CD4-positive, alpha-beta memory T cell (primary cell): ENCODE measurements at regions of chr17 and their contacts with region 1.

Region 1: GRCh38 chr17:14152721-14153120 is 83.4 kb downstream of the COX10 start:
- DNase-seq: no peak
- H3K4me3 ChIP-seq: no peak overlapping the region
- H3K4me3 Mint-ChIP-seq: no peak overlapping the region
- H3K27ac ChIP-seq: no peak overlapping the region
- H3K27ac Mint-ChIP-seq: peak overlapping the region in 3 of 7 donors; percentile 11 to 72 (median 17)
- H3K4me1 ChIP-seq: peaks cover 23% of the 10 kb centered on the region
- H3K4me1 Mint-ChIP-seq: peaks cover 29 to 55% (median 38%) of the 10 kb centered on the region in 4 donors
- H3K27me3 ChIP-seq: no peaks in the 10 kb centered on the region
- H3K27me3 Mint-ChIP-seq: no peaks in the 10 kb centered on the region

Region 2: GRCh38 chr17:14113137-14113536 is 39.6 kb before region 1 on chr17:
- CTCF ChIA-PET with region 1: no interaction called
- POLR2A ChIA-PET with region 1: no interaction called
- intact Hi-C with region 1: loop called (anchors 5 kb)
- DNase-seq: no peak
- H3K4me3 ChIP-seq: no peak overlapping the region
- H3K4me3 Mint-ChIP-seq: peak overlapping the region in 1 of 8 donors; percentile 13
- H3K27ac ChIP-seq: no peak overlapping the region
- H3K27ac Mint-ChIP-seq: peak overlapping the region in 2 of 7 donors; percentile 25 to 38
- H3K4me1 ChIP-seq: peaks cover 27% of the 10 kb centered on the region
- H3K4me1 Mint-ChIP-seq: peaks cover 40 to 60% (median 45%) of the 10 kb centered on the region in 4 donors
- H3K27me3 ChIP-seq: no peaks in the 10 kb centered on the region
- H3K27me3 Mint-ChIP-seq: no peaks in the 10 kb centered on the region

Region 3: DNA sequence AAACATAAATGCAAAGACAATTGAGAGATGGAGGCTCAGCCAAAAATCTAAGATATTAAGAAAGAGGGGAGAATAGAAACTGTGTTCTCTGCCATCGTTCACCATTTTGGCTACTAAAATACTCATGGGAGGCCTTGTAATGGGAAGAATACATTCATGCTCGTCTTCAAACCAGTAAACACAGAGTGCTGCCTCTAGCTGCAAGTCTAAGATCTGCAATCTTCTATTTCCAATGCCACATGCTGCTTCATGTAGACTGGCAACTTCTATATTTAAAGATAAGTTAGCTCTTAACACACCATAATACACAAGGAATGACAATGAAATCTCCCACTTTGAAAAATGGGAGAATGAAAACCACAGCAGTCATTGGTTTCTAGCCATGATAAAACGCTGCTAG is 535.4 kb after region 1 on chr17:
- CTCF ChIA-PET with region 1: no interaction called
- POLR2A ChIA-PET with region 1: no interaction called
- intact Hi-C with region 1: no loop called
- DNase-seq: no peak
- H3K4me3 ChIP-seq: no peak overlapping the region
- H3K4me3 Mint-ChIP-seq: no peak overlapping the region
- H3K27ac ChIP-seq: no peak overlapping the region
- H3K27ac Mint-ChIP-seq: no peak overlapping the region
- H3K4me1 ChIP-seq: no peaks in the 10 kb centered on the region
- H3K4me1 Mint-ChIP-seq: no peaks in the 10 kb centered on the region
- H3K27me3 ChIP-seq: no peaks in the 10 kb centered on the region
- H3K27me3 Mint-ChIP-seq: peaks cover 4 to 8% of the 10 kb centered on the region in 2 donors